Prostate gland (tissue), 2 donors: ENCODE measurements at regions of chr17 and their contacts with region 1.

Region 1: DNA sequence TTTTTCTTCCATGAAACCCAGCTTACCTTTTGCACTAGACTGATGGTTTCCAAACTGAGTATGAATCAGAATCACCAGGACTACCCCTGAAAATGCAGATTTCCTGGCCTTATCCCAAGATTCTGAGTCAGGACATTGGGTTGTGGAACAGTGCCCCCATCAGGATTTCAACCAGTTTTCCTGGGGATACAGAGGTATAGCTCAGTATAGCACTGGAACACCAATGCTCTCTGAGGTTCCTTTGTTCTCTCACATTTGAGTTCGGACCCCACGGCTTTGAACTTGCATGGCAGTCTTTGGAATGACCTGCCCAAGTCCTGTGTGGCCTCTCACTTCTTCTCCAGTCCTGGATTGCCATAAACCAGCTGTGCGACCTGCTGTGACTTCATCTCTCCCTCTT is 12.8 kb upstream of the CCL8 start:
- DNase-seq: no peak
- H3K4me3 ChIP-seq: no peak overlapping the region
- H3K27ac ChIP-seq: no peak overlapping the region
- H3K4me1 ChIP-seq: no peaks in the 10 kb centered on the region
- H3K27me3 ChIP-seq: no peaks in the 10 kb centered on the region
- CTCF ChIP-seq: peak in 2 of 4 experiments; percentile 39 to 58
- POLR2A ChIP-seq: no peak

Region 2: DNA sequence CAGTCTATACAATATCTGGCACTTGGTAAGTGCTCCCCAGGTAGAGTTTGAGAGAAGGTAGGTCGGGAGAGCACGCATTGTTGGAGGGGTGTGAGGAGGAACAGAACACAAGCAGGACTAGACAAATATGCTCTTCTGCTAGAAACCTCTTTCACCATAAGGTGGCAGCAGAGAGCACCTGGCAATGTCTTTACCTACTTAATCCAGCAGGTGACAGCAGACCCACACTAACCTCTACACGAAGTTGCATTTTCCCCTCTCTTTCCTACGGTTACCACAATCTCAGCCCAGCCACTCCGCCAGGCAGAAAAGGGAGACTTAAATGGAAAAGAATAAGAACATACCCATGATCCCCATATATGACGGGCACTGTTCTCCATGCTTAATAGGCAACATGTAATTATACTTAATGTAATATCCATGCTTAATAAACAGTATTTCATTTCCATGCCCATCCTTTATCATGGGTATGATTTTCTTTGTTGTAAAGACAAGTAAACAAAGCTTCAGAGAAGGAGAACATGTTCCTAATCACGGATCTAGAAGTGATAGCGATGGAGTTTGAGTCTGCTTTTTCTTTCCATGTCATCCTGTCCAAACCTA is 106.4 kb before region 1 on chr17:
- intact Hi-C with region 1: loop called (anchors 2 kb)
- DNase-seq: peak; percentile 83
- H3K4me3 ChIP-seq: no peak overlapping the region
- H3K27ac ChIP-seq: no peak overlapping the region
- H3K4me1 ChIP-seq: no peaks in the 10 kb centered on the region
- H3K27me3 ChIP-seq: no peaks in the 10 kb centered on the region
- CTCF ChIP-seq: peak; percentile 100
- POLR2A ChIP-seq: no peak

Region 3: GRCh38 chr17:34275881-34276280 is 30.6 kb before region 1 on chr17:
- intact Hi-C with region 1: no loop called
- DNase-seq: no peak
- H3K4me3 ChIP-seq: no peak overlapping the region
- H3K27ac ChIP-seq: no peak overlapping the region
- H3K4me1 ChIP-seq: no peaks in the 10 kb centered on the region
- H3K27me3 ChIP-seq: no peaks in the 10 kb centered on the region
- CTCF ChIP-seq: no peak
- POLR2A ChIP-seq: no peak

Region 4: DNA sequence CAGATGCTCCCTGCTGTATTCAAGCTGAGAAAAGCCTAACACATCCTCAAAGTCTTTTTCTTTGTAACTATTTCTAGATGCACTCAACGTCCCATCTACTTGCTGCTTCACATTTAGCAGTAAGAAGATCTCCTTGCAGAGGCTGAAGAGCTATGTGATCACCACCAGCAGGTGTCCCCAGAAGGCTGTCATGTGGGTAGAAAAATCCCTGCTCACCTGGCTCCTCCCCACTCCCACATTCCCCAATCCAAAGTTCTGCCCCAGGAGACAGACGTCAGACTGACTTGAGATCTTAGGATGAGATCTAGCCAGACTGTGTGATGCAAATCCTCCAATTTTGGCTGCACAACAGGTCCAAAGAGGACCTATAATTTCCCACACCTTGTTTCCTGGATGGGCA is 50.9 kb after region 1 on chr17:
- intact Hi-C with region 1: no loop called
- DNase-seq: no peak
- H3K4me3 ChIP-seq: no peak overlapping the region
- H3K27ac ChIP-seq: no peak overlapping the region
- H3K4me1 ChIP-seq: no peaks in the 10 kb centered on the region
- H3K27me3 ChIP-seq: no peaks in the 10 kb centered on the region
- CTCF ChIP-seq: no peak
- POLR2A ChIP-seq: no peak